A673 (cell line): ENCODE measurements at regions of chr11 and their contacts with region 1.

Region 1: GRCh38 chr11:34349882-34350281 is 7.9 kb downstream of the ABTB2 start:
- DNase-seq: no peak
- H3K4me3 ChIP-seq: no peak overlapping the region
- H3K27ac ChIP-seq: no peak overlapping the region
- H3K4me1 ChIP-seq: peaks cover 53% of the 10 kb centered on the region
- H3K27me3 ChIP-seq: no peaks in the 10 kb centered on the region
- CTCF ChIP-seq: no peak

Region 2: DNA sequence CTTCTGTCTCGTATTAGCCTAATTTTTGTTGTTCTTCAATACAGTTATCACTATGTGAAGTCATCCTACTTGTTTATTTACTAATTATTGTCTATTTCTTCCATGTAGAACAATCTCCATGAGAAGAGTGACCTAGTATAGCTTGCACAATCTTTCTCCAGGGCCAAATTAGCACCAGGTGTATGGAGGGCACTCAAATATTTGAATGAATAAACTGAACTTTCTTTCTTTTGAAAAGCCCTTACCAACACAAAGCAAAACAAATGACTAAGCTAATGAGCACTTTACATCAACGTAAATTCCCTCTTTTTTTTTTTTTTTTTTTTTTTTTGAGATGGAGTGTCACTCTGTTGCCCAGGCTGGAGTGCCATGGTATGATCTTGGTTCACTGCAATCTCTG is 26.3 kb before region 1 on chr11:
- CTCF ChIA-PET with region 1: no interaction called
- POLR2A ChIA-PET with region 1: interaction called, 11 read pairs
- intact Hi-C with region 1: no loop called
- DNase-seq: no peak
- H3K4me3 ChIP-seq: no peak overlapping the region
- H3K27ac ChIP-seq: no peak overlapping the region
- H3K4me1 ChIP-seq: no peaks in the 10 kb centered on the region
- H3K27me3 ChIP-seq: no peaks in the 10 kb centered on the region
- CTCF ChIP-seq: no peak

Region 3: GRCh38 chr11:34427186-34427805 is 77.4 kb after region 1 on chr11:
- CTCF ChIA-PET with region 1: no interaction called
- POLR2A ChIA-PET with region 1: no interaction called
- intact Hi-C with region 1: no loop called
- DNase-seq: peak; percentile 86
- H3K4me3 ChIP-seq: no peak overlapping the region
- H3K27ac ChIP-seq: peak overlapping the region; percentile 45
- H3K4me1 ChIP-seq: peaks cover 27% of the 10 kb centered on the region
- H3K27me3 ChIP-seq: no peaks in the 10 kb centered on the region
- CTCF ChIP-seq: no peak